HEK293 (cell line): ENCODE measurements at regions of chr2 and their contacts with region 1.

Region 1: DNA sequence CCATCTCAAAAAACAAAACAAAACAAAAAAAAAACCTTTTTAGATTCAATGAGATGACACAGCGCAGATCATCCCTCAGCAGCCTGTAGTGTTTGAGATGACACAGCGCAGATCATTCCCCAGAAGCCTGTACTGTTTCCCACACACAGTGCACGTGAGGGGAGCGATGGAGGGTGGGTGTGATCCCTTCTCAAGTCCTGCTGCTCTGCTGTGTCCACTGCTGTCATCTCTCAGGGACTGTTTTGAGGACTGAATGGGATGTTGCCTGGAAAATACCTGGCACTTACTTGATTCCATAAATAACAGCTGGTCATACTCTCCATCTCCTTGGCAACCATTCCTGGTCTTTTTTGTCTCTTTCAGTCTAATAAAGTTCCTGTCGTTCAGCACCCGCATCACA is 25.7 kb downstream of the TGOLN2 start:
- H3K4me3 ChIP-seq: no peak overlapping the region
- H3K27ac ChIP-seq: no peak overlapping the region
- H3K4me1 ChIP-seq: no peaks in the 10 kb centered on the region
- CTCF ChIP-seq: no peak

Region 2: DNA sequence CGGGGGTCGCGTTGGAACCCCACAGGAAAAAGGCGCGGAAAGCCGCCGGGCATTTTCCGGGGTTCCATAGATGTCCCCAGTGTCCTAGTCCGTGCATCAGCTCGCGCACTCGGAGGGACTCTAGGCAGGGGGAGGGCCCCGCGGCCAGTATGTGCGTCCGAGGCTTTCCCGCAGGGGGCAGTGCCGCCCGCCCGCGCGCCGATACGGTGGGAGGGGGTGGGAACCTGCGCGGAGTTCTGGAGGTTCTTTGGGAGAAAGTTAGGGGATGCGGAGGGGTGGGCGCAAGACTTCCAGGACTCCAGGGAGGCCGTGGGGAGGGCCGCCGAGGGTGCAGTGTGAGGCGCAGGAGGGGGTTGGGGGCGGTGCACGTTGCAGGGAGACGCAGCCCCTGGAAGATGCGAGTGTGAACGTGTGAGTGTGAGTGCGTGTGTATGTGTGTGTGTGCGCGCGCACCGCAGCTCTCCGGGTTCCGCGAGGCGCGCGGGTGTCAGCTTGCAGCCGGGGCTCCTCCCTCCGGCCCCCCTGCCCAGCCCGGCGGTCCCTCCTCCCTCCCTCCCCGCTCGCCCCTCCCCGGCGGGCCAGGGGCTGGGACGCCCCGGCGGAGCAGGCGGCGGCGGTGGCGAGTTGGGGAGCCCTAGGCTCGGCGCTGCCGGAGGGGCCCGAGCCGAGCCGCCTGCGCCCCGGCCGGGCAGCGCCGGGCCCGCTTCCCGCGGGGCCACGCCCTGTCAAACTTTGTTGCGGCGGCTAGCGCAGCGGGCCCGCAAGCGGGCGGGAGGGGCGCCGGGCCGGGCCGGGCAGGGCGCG is 169.1 kb before region 1 on chr2 and contains the start of gene TCF7L1:
- CTCF ChIA-PET with region 1: interaction called, 12 read pairs
- POLR2A ChIA-PET with region 1: interaction called, 4 read pairs
- H3K4me3 ChIP-seq: peak within 1 kb of the TSS; percentile 58
- H3K27ac ChIP-seq: peak within 1 kb of the TSS; percentile 41; the same call in 1 of the 2 replicates
- H3K4me1 ChIP-seq: peaks cover 3% of the 10 kb centered on the region; the same call in 1 of the 2 replicates
- CTCF ChIP-seq: peak; percentile 91

Region 3: GRCh38 chr2:85288244-85288725 is 13.8 kb before region 1 on chr2:
- CTCF ChIA-PET with region 1: interaction called, 103 read pairs
- POLR2A ChIA-PET with region 1: no interaction called
- H3K4me3 ChIP-seq: no peak overlapping the region
- H3K27ac ChIP-seq: no peak overlapping the region
- H3K4me1 ChIP-seq: no peaks in the 10 kb centered on the region
- CTCF ChIP-seq: no peak

Region 4: DNA sequence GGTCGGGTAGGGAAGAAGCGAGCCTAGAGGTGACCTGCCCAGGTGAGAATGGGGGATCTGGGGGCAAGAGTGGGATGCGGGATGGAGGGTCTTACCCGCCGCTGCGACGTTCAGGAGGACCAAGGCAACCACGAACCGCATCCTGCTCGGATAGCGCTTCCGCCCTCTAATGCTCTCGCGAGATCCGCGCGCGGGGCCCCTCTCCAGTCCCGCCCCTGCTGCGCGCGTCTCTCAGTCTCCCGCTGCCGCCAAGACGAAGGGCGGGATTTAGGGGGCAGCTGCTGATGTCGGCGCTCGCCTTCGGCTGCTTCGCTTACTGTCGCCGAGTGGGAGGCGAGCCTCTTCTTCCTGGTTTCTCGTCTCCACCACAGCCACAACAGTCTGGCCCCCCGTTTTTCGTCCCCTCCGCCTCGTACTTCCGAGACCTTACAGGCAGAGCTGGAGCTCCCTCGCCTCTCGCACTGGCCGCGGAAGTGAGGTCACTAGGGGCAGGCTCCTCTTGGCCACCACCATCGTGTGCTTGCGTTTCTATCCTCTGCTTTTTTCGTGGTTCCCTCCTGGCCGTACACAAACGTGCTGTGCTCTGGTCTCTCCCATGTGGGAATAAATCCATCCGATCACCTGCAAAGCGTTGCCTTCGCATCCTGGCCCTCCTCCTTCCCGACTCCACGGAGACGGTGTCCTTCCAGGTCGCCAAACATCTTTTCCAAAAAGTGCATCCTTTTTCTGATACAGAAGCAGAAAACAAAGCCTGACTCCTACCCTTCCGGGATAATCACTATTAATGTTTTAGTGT is 25.9 kb after region 1 on chr2 and contains the start of gene TGOLN2:
- CTCF ChIA-PET with region 1: interaction called, 11 read pairs
- POLR2A ChIA-PET with region 1: no interaction called
- H3K4me3 ChIP-seq: peak within 1 kb of the TSS; percentile 85
- H3K27ac ChIP-seq: peak within 1 kb of the TSS; percentile 93
- H3K4me1 ChIP-seq: no peaks in the 10 kb centered on the region
- CTCF ChIP-seq: peak; percentile 83

Region 5: GRCh38 chr2:85577386-85578242 is 275.5 kb after region 1 on chr2 and contains the start of gene VAMP8:
- CTCF ChIA-PET with region 1: no interaction called
- POLR2A ChIA-PET with region 1: no interaction called
- H3K4me3 ChIP-seq: peak within 1 kb of the TSS; percentile 55
- H3K27ac ChIP-seq: peak within 1 kb of the TSS; percentile 56
- H3K4me1 ChIP-seq: peaks cover 14% of the 10 kb centered on the region
- CTCF ChIP-seq: no peak